Activated T-helper 2 cell treated with anti-CD3 and anti-CD28 coated beads, Interferon-gamma antibody, Interleukin-2, Interleukin-4, amounts not matched to agents 10 μg/mL and 5 μg/mL and 100 μg/mL, durations not matched to agents 14 hours and 24 hours and 36 hours (primary cell): ENCODE measurements at regions of chr18 and their contacts with region 1.

Region 1: GRCh38 chr18:21600526-21601410 is at the start of gene ESCO1:
- DNase-seq: peak; percentile 95
- H3K4me3 Mint-ChIP-seq: peak within 1 kb of the TSS; percentile 98
- H3K27ac Mint-ChIP-seq: peak within 1 kb of the TSS; percentile 84
- H3K4me1 Mint-ChIP-seq: peaks cover 23% of the 10 kb centered on the region
- H3K27me3 Mint-ChIP-seq: peaks cover 3% of the 10 kb centered on the region
- total RNA-seq, gene ESCO1: 20.5 and 21.4 TPM in 2 replicates

Region 2: GRCh38 chr18:21489119-21489750 is 111.5 kb before region 1 on chr18:
- intact Hi-C with region 1: loop called (anchors 5 kb)
- DNase-seq: no peak
- H3K4me3 Mint-ChIP-seq: no peak overlapping the region
- H3K27ac Mint-ChIP-seq: no peak overlapping the region
- H3K4me1 Mint-ChIP-seq: no peaks in the 10 kb centered on the region
- H3K27me3 Mint-ChIP-seq: peaks cover 6% of the 10 kb centered on the region

Region 3: DNA sequence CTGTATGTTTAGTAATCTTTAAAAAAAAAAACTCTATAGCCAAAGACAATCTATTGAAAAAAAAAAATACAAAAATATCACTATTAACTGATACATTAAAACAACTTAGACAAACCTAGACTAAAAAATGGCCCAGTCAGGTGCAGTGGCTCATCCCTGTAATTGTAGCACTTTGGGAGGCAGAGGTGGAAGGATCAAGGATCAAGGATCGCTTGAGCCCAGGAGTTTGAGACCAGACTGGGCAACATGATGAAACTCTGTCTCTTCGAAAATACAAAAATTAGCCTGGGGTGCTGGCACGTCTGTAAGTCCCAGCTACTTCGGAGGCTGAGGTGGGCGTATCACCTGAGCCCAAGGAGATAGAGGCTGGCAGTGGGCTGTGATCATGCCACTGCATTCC is 16.4 kb before region 1 on chr18:
- intact Hi-C with region 1: loop called (anchors 2 kb)
- DNase-seq: no peak
- H3K4me3 Mint-ChIP-seq: no peak overlapping the region
- H3K27ac Mint-ChIP-seq: no peak overlapping the region
- H3K4me1 Mint-ChIP-seq: peaks cover 6% of the 10 kb centered on the region
- H3K27me3 Mint-ChIP-seq: no peaks in the 10 kb centered on the region

Region 4: GRCh38 chr18:21663578-21663977 is 62.8 kb after region 1 on chr18:
- intact Hi-C with region 1: no loop called
- DNase-seq: no peak
- H3K4me3 Mint-ChIP-seq: no peak overlapping the region
- H3K27ac Mint-ChIP-seq: no peak overlapping the region
- H3K4me1 Mint-ChIP-seq: peaks cover 5% of the 10 kb centered on the region
- H3K27me3 Mint-ChIP-seq: no peaks in the 10 kb centered on the region

Region 5: DNA sequence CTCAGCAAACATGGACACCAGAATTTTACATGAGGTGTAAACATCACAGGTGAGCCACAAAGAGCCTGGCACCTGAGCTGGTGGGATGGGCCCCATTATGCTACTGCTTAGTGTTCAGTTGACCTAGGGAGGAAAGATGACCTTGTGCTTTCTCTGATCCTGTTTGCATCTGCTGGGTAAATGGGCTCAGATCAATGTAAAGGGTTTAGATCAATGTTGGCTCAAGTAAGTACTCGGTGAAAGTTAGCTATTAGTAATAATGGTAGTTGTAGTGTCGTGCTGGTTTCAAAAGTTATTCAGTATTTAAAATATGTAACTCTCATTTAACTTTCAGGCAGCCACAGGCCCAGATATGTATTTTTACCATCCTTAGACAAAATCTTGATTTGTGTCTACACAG is 84.0 kb after region 1 on chr18:
- intact Hi-C with region 1: no loop called
- DNase-seq: no peak
- H3K4me3 Mint-ChIP-seq: no peak overlapping the region
- H3K27ac Mint-ChIP-seq: peak overlapping the region; percentile 4
- H3K4me1 Mint-ChIP-seq: peaks cover 13% of the 10 kb centered on the region
- H3K27me3 Mint-ChIP-seq: no peaks in the 10 kb centered on the region

Region 6: GRCh38 chr18:21704603-21705364 is 104.0 kb after region 1 on chr18 and contains the start of gene ABHD3:
- intact Hi-C with region 1: no loop called
- DNase-seq: peak; percentile 90
- H3K4me3 Mint-ChIP-seq: peak within 1 kb of the TSS; percentile 96
- H3K27ac Mint-ChIP-seq: peak within 1 kb of the TSS; percentile 89
- H3K4me1 Mint-ChIP-seq: peaks cover 21% of the 10 kb centered on the region
- H3K27me3 Mint-ChIP-seq: no peaks in the 10 kb centered on the region
- total RNA-seq, gene ABHD3: 29.6 and 31.2 TPM in 2 replicates

Region 7: DNA sequence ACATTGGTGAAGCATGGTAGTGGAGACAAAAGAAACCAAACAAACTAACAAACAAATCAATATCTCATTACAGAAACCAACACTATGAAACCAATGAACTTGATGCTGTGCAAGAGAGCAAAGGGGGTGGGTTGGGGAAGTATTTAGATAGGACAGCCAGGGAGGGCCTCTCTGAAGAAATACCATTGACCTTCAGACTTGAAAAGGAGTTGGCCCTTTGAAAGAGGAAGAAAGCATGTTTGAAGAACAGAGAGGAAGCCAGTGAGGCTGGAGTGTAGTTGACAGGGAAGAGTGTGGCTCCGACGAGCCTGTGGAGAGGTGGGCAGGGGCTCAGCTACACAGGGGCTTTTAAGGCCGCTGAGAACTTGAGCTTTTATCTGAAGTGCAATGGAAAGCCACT is 417.6 kb after region 1 on chr18:
- intact Hi-C with region 1: no loop called
- DNase-seq: no peak
- H3K4me3 Mint-ChIP-seq: no peak overlapping the region
- H3K27ac Mint-ChIP-seq: no peak overlapping the region
- H3K4me1 Mint-ChIP-seq: no peaks in the 10 kb centered on the region
- H3K27me3 Mint-ChIP-seq: no peaks in the 10 kb centered on the region